ENCODE measurements at regions of chr2 and their contacts with region 1.

Region 1: GRCh38 chr2:101205521-101205998 is 47.1 kb upstream of the CNOT11 start:
- DNase-seq: peak; percentile 66
- H3K4me3 ChIP-seq: no peak overlapping the region
- H3K27ac ChIP-seq: no peak overlapping the region
- H3K4me1 ChIP-seq: no peaks in the 10 kb centered on the region
- H3K27me3 ChIP-seq: no peaks in the 10 kb centered on the region
- CTCF ChIP-seq: peak; percentile 7 to 66 (median 54)
- POLR2A ChIP-seq: no peak

Region 2: GRCh38 chr2:101036562-101037457 is 168.8 kb before region 1 on chr2:
- intact Hi-C with region 1: loop called (anchors 10 kb)
- DNase-seq: no peak
- H3K4me3 ChIP-seq: no peak overlapping the region
- H3K27ac ChIP-seq: no peak overlapping the region
- H3K4me1 ChIP-seq: no peaks in the 10 kb centered on the region
- H3K27me3 ChIP-seq: no peaks in the 10 kb centered on the region
- CTCF ChIP-seq: peak in 3 of 4 experiments; percentile 56 to 79 (median 66)
- POLR2A ChIP-seq: no peak

Measured in prostate gland (tissue), 2 donors.